Activated T-helper 2 cell treated with anti-CD3 and anti-CD28 coated beads, Interferon-gamma antibody, Interleukin-2, Interleukin-4, amounts not matched to agents 10 μg/mL and 5 μg/mL and 100 μg/mL, durations not matched to agents 14 hours and 24 hours and 36 hours (primary cell): ENCODE measurements at regions of chr4 and their contacts with region 1.

Region 1: GRCh38 chr4:53908661-53909078 is 155.7 kb downstream of the CHIC2 start:
- DNase-seq: no peak
- H3K4me3 Mint-ChIP-seq: no peak overlapping the region
- H3K27ac Mint-ChIP-seq: no peak overlapping the region
- H3K4me1 Mint-ChIP-seq: peaks cover 11% of the 10 kb centered on the region
- H3K27me3 Mint-ChIP-seq: peaks cover 46% of the 10 kb centered on the region

Region 2: GRCh38 chr4:54099748-54100574 is 191.3 kb after region 1 on chr4 and contains the start of gene GSX2:
- intact Hi-C with region 1: loop called (anchors 2 kb)
- DNase-seq: no peak
- H3K4me3 Mint-ChIP-seq: no peak within 1 kb of the TSS
- H3K27ac Mint-ChIP-seq: no peak within 1 kb of the TSS
- H3K4me1 Mint-ChIP-seq: peaks cover 26% of the 10 kb centered on the region
- H3K27me3 Mint-ChIP-seq: peaks cover 90% of the 10 kb centered on the region
- total RNA-seq, gene GSX2: not detected in 2 replicates

Region 3: DNA sequence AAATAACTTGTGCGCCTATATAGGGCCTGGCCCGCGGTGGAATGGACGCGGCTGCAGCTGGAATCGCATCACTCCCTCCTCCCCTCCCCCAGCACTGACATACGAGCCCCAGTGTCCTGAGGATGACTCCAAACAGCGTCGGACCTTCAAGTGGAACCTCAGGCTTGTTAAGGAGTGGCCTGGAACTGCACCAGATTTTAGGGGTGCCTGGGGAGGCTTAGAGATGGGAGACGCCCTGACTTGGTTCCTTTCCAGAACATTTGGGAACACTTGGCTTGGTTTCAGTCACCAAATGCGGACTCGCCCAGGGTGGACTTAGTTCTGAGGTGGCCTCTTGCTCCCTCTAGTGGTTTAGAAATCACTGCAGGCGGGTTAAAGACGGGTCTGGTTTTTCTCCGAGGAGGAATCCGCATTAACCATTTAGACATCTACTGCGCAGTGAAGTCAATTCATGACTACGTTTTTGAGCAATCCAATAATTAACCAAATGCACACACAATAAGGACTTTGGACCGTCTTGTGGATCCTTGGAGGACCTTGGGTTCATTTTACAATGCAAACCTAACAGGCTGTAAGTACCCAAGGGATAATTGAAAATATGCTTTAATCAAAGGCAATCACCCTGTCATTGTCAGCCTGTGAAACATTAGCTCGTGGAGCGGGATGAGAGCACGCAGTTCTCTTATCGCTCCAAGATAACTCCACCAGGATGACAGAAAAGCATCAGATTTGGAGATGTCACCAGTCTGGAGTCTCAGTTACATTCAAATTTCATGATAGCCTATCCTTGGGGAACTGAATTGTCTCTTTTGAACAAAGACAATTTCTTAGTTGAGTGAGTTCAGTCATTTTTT is 309.2 kb after region 1 on chr4:
- intact Hi-C with region 1: loop called (anchors 1 kb)
- DNase-seq: peak; percentile 37
- H3K4me3 Mint-ChIP-seq: no peak overlapping the region
- H3K27ac Mint-ChIP-seq: no peak overlapping the region
- H3K4me1 Mint-ChIP-seq: peaks cover 1% of the 10 kb centered on the region
- H3K27me3 Mint-ChIP-seq: peaks cover 32% of the 10 kb centered on the region